Dendritic cell treated with granulocyte-macrophage colony-stimulating factor and Interleukin-4, amounts not matched to agents 40 ng/mL and 50 ng/mL, for 4 days (primary cell): ENCODE measurements at regions of chr2 and their contacts with region 1.

Region 1: DNA sequence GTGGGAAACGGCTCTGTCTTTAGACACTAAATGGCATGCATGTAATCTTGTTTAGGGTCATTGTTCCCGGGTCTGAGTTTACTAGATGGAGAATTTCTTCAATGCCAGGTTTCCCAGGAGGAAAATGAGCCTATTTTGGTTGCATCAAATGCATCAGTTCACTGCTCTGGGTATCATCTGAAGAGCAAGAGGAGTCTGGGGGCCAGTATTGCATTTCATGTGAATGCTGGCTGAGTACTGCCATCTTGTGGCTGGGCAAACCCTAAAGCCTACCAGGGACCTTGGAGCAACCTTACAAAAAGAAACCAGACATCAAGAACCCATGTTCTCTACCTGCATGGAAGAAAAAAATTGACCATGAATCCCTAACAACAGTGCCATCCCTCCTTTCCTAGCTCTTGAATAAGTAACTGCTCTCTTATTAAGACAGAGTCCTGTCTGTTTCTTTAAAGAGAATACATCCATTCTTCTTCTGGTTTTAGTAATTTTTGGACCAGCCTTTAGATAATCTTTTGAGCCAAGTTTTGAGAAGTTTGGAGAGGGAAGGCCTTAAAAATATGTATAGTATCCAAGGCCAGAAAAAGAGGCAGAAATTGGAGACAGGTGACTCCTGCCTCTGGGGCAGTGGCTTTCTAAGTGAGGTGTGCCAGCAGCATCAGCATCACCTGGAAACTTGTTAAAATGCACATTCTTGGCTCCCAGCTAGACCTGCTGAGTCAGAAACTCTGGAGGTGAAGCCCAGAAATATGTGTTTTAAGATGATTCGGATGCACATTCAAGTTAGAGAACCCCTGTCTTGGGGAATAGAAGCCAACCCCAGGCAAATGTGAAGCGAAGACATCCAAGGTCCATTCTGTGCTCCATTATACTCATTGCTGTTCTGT is 261.0 kb upstream of the CXCR4 start:
- H3K4me3 Mint-ChIP-seq: no peak overlapping the region
- H3K27ac Mint-ChIP-seq: no peak overlapping the region
- H3K4me1 Mint-ChIP-seq: peaks cover 39% of the 10 kb centered on the region
- H3K27me3 Mint-ChIP-seq: no peaks in the 10 kb centered on the region

Region 2: DNA sequence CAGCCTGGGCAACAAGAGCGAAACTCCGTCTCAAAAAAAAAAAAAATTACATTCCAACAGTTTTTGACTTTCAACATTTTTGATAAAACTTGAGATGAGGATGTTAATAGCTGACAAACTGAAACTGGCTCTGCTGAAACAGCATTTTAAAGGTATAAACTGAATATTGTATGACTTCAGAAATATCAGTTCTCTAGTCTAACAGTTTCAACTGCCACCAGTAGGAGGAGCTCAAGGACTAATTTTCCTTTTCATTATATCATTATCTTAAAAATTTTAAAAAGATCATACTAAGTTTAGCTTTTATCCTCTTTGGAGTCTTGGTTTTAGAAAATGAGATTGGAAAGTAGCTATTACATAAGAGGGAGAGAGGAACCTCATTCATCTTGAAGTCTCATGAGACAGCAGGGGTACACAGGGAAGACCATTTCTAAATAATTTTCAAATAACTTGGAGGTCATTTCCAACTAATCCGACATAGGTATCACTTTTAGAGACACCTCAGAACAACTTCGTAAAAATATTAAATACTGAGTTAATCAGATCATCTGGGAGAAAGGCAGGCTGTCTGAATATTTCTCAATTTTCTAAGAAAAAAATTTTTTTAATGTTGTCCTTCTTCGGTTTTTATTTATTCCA is 465.1 kb before region 1 on chr2:
- intact Hi-C with region 1: loop called (anchors 1 kb)
- H3K4me3 Mint-ChIP-seq: no peak overlapping the region
- H3K27ac Mint-ChIP-seq: no peak overlapping the region
- H3K4me1 Mint-ChIP-seq: no peaks in the 10 kb centered on the region
- H3K27me3 Mint-ChIP-seq: no peaks in the 10 kb centered on the region

Region 3: GRCh38 chr2:135985018-135985825 is 393.7 kb before region 1 on chr2 and contains the start of gene DARS1:
- intact Hi-C with region 1: loop called (anchors 5 kb)
- H3K4me3 Mint-ChIP-seq: peak within 1 kb of the TSS; percentile 87
- H3K27ac Mint-ChIP-seq: peak within 1 kb of the TSS; percentile 99
- H3K4me1 Mint-ChIP-seq: peaks cover 27% of the 10 kb centered on the region
- H3K27me3 Mint-ChIP-seq: no peaks in the 10 kb centered on the region

Region 4: DNA sequence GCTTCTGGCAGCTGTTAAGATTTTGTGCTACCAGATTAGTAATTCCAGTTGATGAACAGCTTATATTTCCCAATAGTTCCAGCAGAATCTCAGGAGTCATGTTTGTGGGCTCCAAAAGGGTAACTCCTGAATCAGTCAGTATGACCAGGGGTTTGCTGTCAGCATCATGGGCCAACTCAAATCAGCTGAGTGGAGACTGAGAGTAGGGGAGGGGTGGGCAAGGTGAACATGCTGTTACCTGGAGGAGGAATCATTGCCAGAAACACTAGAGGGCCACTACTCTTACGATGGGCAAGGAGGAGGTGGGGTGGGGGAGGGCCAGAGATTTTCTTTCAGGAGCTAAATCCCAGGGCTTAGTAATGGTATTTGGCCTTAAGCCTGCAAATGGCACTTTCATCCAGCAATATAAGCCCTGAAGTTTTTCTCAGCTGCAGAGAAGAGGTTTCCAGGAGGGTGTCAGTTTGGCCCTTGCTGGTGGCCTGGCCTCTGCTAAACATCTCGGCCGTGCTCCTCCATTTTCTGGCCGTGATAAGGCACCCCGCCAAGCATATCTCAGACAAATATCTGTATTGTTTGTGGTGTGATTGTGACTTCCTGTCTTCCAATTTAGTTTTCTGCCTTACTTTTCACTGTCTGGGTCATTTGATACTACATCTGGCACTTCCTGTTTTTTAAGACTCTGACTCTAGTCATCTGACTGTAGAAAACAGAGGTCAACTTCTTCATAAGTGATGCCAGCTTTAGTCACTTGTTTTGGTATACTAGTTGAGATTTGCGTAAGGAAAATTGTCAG is 140.5 kb before region 1 on chr2:
- intact Hi-C with region 1: loop called (anchors 10 kb)
- H3K4me3 Mint-ChIP-seq: peak overlapping the region; percentile 13
- H3K27ac Mint-ChIP-seq: peak overlapping the region; percentile 90
- H3K4me1 Mint-ChIP-seq: peaks cover 70% of the 10 kb centered on the region
- H3K27me3 Mint-ChIP-seq: no peaks in the 10 kb centered on the region

Region 5: GRCh38 chr2:136327162-136327852 is 51.6 kb before region 1 on chr2:
- intact Hi-C with region 1: no loop called
- H3K4me3 Mint-ChIP-seq: no peak overlapping the region
- H3K27ac Mint-ChIP-seq: peak overlapping the region; percentile 90
- H3K4me1 Mint-ChIP-seq: peaks cover 81% of the 10 kb centered on the region
- H3K27me3 Mint-ChIP-seq: no peaks in the 10 kb centered on the region

Region 6: DNA sequence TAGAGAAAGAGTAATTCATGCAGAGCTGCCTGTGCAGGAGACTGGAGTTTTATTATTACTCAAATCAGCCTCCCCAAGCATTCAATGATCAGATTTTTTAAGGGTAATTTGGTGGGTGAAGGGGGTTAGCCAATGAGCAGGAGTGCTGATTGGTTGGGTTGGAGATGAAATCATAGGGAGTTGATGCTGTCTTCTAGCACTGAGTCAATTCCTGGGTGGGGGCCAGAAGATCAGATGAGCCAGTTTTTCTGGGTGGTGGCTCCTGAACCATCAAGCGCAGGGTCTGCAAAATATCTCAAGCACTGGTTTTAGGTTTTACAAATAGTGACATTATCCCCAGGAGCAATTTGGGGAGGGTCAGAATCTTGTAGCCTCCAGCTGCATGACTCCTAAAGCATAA is 73.6 kb after region 1 on chr2:
- intact Hi-C with region 1: no loop called
- H3K4me3 Mint-ChIP-seq: no peak overlapping the region
- H3K27ac Mint-ChIP-seq: no peak overlapping the region
- H3K4me1 Mint-ChIP-seq: no peaks in the 10 kb centered on the region
- H3K27me3 Mint-ChIP-seq: peaks cover 11% of the 10 kb centered on the region